MCF 10A (cell line): ENCODE measurements at regions of chr16 and their contacts with region 1.

Region 1: DNA sequence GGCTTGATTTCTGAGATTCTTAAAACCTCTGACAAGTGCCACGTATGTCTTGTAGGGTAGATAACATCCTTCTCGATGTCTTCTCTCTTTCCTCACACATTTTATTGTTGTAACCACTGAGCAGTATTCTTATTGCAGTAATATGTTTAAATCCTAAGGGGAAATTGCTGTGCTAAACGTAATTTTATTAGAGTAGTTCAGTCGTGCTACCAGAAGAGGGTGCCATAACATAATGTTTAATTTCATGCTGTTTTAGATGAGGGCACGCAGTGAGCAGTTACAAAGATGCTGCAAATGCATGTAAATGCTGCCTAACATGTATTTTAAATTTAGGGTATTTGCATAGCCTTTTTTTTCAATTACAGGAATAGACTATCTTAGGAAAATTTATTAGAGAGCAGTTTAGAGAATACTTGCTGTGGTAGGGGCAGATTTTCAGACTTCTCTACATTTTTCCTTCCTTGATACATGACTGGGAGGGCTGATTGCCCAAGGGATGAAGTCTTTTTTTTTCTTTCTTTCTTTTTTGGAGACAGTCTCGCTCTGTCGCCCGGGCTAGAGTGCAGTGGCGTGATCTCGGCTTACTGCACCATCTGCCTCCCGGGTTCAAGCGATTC is 51.7 kb downstream of the GAN start:
- DNase-seq: peak; percentile 60
- H3K4me3 Mint-ChIP-seq: no peak overlapping the region
- H3K27ac Mint-ChIP-seq: no peak overlapping the region
- H3K4me1 Mint-ChIP-seq: no peaks in the 10 kb centered on the region
- H3K27me3 Mint-ChIP-seq: no peaks in the 10 kb centered on the region
- CTCF ChIP-seq: peak; percentile 57

Region 2: DNA sequence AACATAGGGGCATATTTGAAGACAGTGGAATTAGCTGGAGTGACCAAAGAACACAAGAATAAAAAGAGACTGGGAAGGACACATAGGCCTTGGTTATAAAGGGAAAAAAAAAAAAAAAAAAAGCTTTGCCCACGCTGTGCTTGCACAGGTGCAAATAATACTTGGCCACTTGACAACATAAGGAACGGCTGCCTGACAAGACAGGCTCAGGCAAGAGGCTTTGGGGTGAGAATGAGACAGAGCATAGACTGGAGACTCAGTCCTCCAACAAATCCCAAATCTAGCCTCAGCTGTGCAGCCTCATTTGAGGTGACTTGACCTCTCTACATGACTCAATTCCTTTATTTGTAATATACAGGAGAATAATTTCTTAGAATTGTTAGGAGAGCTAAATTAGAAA is 1158.4 kb before region 1 on chr16:
- CTCF ChIA-PET with region 1: no interaction called
- POLR2A ChIA-PET with region 1: no interaction called
- intact Hi-C with region 1: no loop called
- DNase-seq: no peak
- H3K4me3 Mint-ChIP-seq: no peak overlapping the region
- H3K27ac Mint-ChIP-seq: no peak overlapping the region
- H3K4me1 Mint-ChIP-seq: peaks cover 8% of the 10 kb centered on the region
- H3K27me3 Mint-ChIP-seq: no peaks in the 10 kb centered on the region
- CTCF ChIP-seq: no peak

Region 3: GRCh38 chr16:81204798-81205680 is 161.4 kb before region 1 on chr16:
- CTCF ChIA-PET with region 1: interaction called, 11 read pairs
- POLR2A ChIA-PET with region 1: no interaction called
- intact Hi-C with region 1: loop called (anchors 10 kb)
- DNase-seq: peak; percentile 50
- H3K4me3 Mint-ChIP-seq: no peak overlapping the region
- H3K27ac Mint-ChIP-seq: no peak overlapping the region
- H3K4me1 Mint-ChIP-seq: no peaks in the 10 kb centered on the region
- H3K27me3 Mint-ChIP-seq: peaks cover 10% of the 10 kb centered on the region
- CTCF ChIP-seq: peak; percentile 54

Region 4: DNA sequence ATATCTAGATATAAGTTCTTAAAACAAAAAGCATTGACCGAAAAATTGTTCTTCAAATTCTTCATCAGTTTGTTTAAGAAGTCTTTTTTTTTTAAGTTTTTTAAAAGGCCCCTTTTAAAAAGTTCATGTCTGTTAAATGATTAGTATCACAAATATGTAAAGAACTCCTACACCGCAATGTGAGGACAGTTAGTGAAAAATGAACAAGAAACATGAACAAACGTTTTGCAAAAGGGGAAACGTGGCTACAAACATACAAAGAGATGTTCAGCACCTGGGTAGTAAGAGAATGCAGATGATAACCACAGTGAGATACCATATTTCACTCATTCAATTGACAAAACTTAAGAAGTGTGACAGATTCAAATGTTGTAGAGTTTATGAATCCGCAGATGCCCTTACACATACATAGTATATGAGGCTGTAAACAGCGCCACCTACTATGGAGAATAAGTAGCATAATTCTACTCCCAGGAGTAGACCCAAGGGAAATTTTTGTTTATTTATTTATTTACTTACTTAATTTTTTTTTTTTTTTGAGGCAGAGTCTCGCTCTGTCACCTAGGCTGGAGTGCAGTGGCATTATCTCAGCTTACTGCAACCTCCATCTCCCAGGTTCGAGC is 16.3 kb before region 1 on chr16:
- CTCF ChIA-PET with region 1: interaction called, 16 read pairs
- POLR2A ChIA-PET with region 1: no interaction called
- intact Hi-C with region 1: no loop called
- DNase-seq: peak; percentile 14
- H3K4me3 Mint-ChIP-seq: no peak overlapping the region
- H3K27ac Mint-ChIP-seq: no peak overlapping the region
- H3K4me1 Mint-ChIP-seq: no peaks in the 10 kb centered on the region
- H3K27me3 Mint-ChIP-seq: no peaks in the 10 kb centered on the region
- CTCF ChIP-seq: no peak

Region 5: GRCh38 chr16:81581112-81581511 is 214.7 kb after region 1 on chr16:
- CTCF ChIA-PET with region 1: no interaction called
- POLR2A ChIA-PET with region 1: no interaction called
- intact Hi-C with region 1: no loop called
- DNase-seq: peak; percentile 91
- H3K4me3 Mint-ChIP-seq: peak overlapping the region; percentile 39
- H3K27ac Mint-ChIP-seq: peak overlapping the region; percentile 93
- H3K4me1 Mint-ChIP-seq: peaks cover 42% of the 10 kb centered on the region
- H3K27me3 Mint-ChIP-seq: no peaks in the 10 kb centered on the region
- CTCF ChIP-seq: no peak

Region 6: DNA sequence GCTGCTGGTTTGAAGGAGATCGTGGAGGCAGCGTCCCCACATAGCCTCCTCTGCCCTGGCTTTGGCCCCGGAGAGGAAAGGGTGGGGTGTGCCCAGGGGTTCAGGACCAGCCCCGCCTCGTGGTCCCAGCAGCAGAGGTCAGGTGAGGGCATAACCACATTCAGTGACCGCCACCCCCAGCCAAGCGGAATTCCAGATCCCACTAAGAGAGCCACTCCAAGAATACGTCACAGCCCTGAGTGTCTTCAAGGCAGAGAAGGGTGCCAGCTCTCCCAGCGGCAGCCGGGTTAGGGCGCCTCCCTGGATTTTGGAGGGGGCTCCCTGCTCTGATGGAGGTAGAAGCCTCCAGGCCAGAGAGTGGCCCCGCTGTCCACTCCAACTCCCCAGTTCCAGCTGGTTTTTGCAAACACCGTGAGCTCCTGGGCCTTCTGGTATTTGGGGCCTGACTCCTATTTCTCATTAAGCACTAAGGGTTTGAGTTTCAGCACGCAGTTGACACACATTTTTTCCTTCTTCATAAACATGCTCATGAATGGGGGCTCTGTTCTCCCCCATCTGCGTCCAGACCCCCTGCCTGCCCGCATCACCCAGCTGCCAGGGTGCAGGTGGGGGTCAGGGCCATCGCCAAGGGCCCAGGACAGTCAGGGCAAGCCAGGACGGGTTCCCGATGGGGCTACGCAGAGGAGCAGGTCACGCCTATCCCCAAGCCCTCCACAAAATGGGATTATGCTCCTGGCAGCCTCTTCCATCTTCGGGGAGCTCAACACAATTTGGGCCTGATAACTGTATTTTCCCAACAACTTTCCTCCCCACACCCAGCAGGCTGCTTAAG is 314.2 kb after region 1 on chr16:
- CTCF ChIA-PET with region 1: no interaction called
- POLR2A ChIA-PET with region 1: no interaction called
- intact Hi-C with region 1: no loop called
- DNase-seq: no peak
- H3K4me3 Mint-ChIP-seq: no peak overlapping the region
- H3K27ac Mint-ChIP-seq: no peak overlapping the region
- H3K4me1 Mint-ChIP-seq: no peaks in the 10 kb centered on the region
- H3K27me3 Mint-ChIP-seq: no peaks in the 10 kb centered on the region
- CTCF ChIP-seq: no peak

Region 7: DNA sequence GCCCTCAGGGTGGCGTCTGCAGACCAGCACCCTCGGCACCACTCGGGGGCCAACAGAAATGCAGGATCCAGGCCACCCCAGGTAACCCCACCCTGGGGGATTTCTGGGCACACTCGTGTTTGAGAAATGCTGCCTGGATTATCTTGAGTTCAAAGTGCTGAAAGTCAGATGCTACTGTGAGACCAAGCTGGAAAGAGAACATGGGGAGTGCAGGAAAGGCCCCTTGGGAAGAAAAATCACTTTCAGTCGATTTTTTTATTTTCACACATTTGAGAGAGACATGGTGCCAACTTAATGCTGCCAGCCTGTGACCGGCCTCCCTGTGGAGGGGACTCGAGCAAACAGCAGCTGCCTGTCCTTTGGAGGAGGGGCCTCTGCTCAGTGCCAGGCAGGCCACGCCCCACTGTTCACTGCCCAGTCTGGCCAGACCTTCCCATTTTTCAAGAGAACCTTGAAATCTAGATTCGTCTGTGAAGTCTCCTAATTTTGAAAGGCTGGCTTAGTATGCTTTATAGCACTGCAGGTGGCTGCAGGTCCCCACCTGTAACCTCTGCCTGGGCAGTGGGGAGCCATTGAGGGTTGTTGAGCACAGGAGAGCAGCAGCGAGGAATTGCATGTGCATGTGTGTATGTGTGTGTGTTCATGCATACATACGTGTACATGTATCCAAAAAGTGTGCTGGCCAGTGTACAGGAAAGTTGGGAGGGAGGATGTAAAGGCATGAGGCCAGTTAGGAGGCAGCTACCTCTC is 342.0 kb after region 1 on chr16:
- CTCF ChIA-PET with region 1: no interaction called
- POLR2A ChIA-PET with region 1: no interaction called
- intact Hi-C with region 1: no loop called
- DNase-seq: no peak
- H3K4me3 Mint-ChIP-seq: no peak overlapping the region
- H3K27ac Mint-ChIP-seq: no peak overlapping the region
- H3K4me1 Mint-ChIP-seq: peaks cover 20% of the 10 kb centered on the region
- H3K27me3 Mint-ChIP-seq: no peaks in the 10 kb centered on the region
- CTCF ChIP-seq: no peak

Region 8: GRCh38 chr16:81723098-81723723 is 356.8 kb after region 1 on chr16:
- CTCF ChIA-PET with region 1: interaction called, 12 read pairs
- POLR2A ChIA-PET with region 1: no interaction called
- intact Hi-C with region 1: loop called (anchors 1 kb)
- DNase-seq: peak; percentile 86
- H3K4me3 Mint-ChIP-seq: no peak overlapping the region
- H3K27ac Mint-ChIP-seq: no peak overlapping the region
- H3K4me1 Mint-ChIP-seq: peaks cover 15% of the 10 kb centered on the region
- H3K27me3 Mint-ChIP-seq: no peaks in the 10 kb centered on the region
- CTCF ChIP-seq: peak; percentile 68

Region 9: GRCh38 chr16:81873843-81874752 is 507.7 kb after region 1 on chr16:
- CTCF ChIA-PET with region 1: interaction called, 4 read pairs
- POLR2A ChIA-PET with region 1: no interaction called
- intact Hi-C with region 1: loop called (anchors 10 kb)
- DNase-seq: peak; percentile 58
- H3K4me3 Mint-ChIP-seq: no peak overlapping the region
- H3K27ac Mint-ChIP-seq: no peak overlapping the region
- H3K4me1 Mint-ChIP-seq: no peaks in the 10 kb centered on the region
- H3K27me3 Mint-ChIP-seq: no peaks in the 10 kb centered on the region
- CTCF ChIP-seq: peak; percentile 79